ENCODE measurements at regions of chr15 and their contacts with region 1.

Region 1: GRCh38 chr15:63514531-63514943 is 10.1 kb downstream of the USP3 start:
- DNase-seq: no peak
- H3K4me3 Mint-ChIP-seq: no peak overlapping the region
- H3K27ac Mint-ChIP-seq: no peak overlapping the region
- H3K4me1 Mint-ChIP-seq: peaks cover 66% of the 10 kb centered on the region
- H3K27me3 Mint-ChIP-seq: no peaks in the 10 kb centered on the region

Region 2: GRCh38 chr15:63449731-63450130 is 64.8 kb before region 1 on chr15:
- CTCF ChIA-PET with region 1: no interaction called
- POLR2A ChIA-PET with region 1: no interaction called
- DNase-seq: no peak
- H3K4me3 Mint-ChIP-seq: no peak overlapping the region
- H3K27ac Mint-ChIP-seq: no peak overlapping the region
- H3K4me1 Mint-ChIP-seq: peaks cover 17% of the 10 kb centered on the region
- H3K27me3 Mint-ChIP-seq: no peaks in the 10 kb centered on the region

Region 3: DNA sequence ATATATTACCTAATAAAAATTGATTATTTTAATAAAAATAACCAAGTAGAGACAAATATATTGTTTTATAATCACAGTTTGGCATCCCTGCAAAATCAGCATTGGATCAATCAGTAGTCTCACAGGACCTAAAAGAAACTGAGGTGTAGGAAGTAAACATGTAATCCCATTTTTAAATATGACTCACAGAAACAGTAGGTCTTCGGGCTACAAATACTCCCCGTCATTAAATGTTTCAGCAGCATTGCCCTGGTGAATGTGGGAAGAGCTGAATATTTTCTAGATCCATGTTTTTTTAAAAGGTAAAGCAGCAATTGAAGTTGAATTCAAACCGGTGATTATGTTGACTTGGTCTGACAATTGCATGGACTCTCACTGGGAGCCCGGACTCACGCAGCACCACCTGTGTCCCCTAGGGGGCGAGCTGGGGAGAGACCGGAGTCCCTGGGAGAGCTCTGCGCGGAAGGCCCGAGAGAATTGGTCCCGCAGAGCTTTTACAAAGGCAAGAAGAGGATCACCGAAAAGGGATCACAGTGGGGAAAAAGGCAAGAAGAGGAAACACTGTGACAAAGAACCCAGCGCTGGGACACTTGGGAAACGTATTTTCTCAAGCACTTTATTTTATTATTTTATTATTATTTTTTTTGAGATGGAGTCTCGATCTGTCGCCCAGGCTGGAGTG is 27.3 kb before region 1 on chr15:
- CTCF ChIA-PET with region 1: interaction called, 26 read pairs
- POLR2A ChIA-PET with region 1: interaction called, 3 read pairs
- DNase-seq: peak; percentile 90
- H3K4me3 Mint-ChIP-seq: peak overlapping the region; percentile 12
- H3K27ac Mint-ChIP-seq: peak overlapping the region; percentile 10
- H3K4me1 Mint-ChIP-seq: peaks cover 57% of the 10 kb centered on the region
- H3K27me3 Mint-ChIP-seq: peaks cover 2% of the 10 kb centered on the region

Region 4: GRCh38 chr15:63600616-63601025 is 86.1 kb after region 1 on chr15:
- CTCF ChIA-PET with region 1: interaction called, 12 read pairs
- POLR2A ChIA-PET with region 1: interaction called, 5 read pairs
- DNase-seq: peak; percentile 91
- H3K4me3 Mint-ChIP-seq: peak overlapping the region; percentile 89
- H3K27ac Mint-ChIP-seq: peak overlapping the region; percentile 87
- H3K4me1 Mint-ChIP-seq: peaks cover 56% of the 10 kb centered on the region
- H3K27me3 Mint-ChIP-seq: no peaks in the 10 kb centered on the region

Measured in activated CD4-positive, alpha-beta memory T cell treated with anti-CD3 and anti-CD28 coated beads, Interleukin-2, amount 10 ng/mL, durations not matched to agents 7 days and 5 days (primary cell).